Activated CD4-positive, alpha-beta memory T cell treated with anti-CD3 and anti-CD28 coated beads for 36 hours (primary cell): ENCODE measurements at regions of chr5 and their contacts with region 1.

Region 1: GRCh38 chr5:154783774-154784460 is 28.7 kb downstream of the LARP1 start:
- DNase-seq: no peak
- H3K4me3 Mint-ChIP-seq: no peak overlapping the region
- H3K27ac Mint-ChIP-seq: peak overlapping the region; percentile 64
- H3K4me1 Mint-ChIP-seq: peaks cover 89% of the 10 kb centered on the region
- H3K27me3 Mint-ChIP-seq: no peaks in the 10 kb centered on the region

Region 2: GRCh38 chr5:154767576-154767975 is 16.3 kb before region 1 on chr5:
- CTCF ChIA-PET with region 1: interaction called, 3 read pairs
- POLR2A ChIA-PET with region 1: no interaction called
- intact Hi-C with region 1: loop called (anchors 2 kb)
- DNase-seq: no peak
- H3K4me3 Mint-ChIP-seq: peak overlapping the region; percentile 30
- H3K27ac Mint-ChIP-seq: peak overlapping the region; percentile 79
- H3K4me1 Mint-ChIP-seq: peaks cover 71% of the 10 kb centered on the region
- H3K27me3 Mint-ChIP-seq: no peaks in the 10 kb centered on the region

Region 3: GRCh38 chr5:154916884-154917283 is 133.0 kb after region 1 on chr5:
- CTCF ChIA-PET with region 1: no interaction called
- POLR2A ChIA-PET with region 1: no interaction called
- intact Hi-C with region 1: no loop called
- DNase-seq: no peak
- H3K4me3 Mint-ChIP-seq: no peak overlapping the region
- H3K27ac Mint-ChIP-seq: no peak overlapping the region
- H3K4me1 Mint-ChIP-seq: no peaks in the 10 kb centered on the region
- H3K27me3 Mint-ChIP-seq: no peaks in the 10 kb centered on the region

Region 4: GRCh38 chr5:155082401-155082800 is 298.5 kb after region 1 on chr5:
- CTCF ChIA-PET with region 1: no interaction called
- POLR2A ChIA-PET with region 1: no interaction called
- intact Hi-C with region 1: no loop called
- DNase-seq: no peak
- H3K4me3 Mint-ChIP-seq: no peak overlapping the region
- H3K27ac Mint-ChIP-seq: no peak overlapping the region
- H3K4me1 Mint-ChIP-seq: no peaks in the 10 kb centered on the region
- H3K27me3 Mint-ChIP-seq: peaks cover 2% of the 10 kb centered on the region